ENCODE measurements at regions of chr16 and their contacts with region 1.

Region 1: DNA sequence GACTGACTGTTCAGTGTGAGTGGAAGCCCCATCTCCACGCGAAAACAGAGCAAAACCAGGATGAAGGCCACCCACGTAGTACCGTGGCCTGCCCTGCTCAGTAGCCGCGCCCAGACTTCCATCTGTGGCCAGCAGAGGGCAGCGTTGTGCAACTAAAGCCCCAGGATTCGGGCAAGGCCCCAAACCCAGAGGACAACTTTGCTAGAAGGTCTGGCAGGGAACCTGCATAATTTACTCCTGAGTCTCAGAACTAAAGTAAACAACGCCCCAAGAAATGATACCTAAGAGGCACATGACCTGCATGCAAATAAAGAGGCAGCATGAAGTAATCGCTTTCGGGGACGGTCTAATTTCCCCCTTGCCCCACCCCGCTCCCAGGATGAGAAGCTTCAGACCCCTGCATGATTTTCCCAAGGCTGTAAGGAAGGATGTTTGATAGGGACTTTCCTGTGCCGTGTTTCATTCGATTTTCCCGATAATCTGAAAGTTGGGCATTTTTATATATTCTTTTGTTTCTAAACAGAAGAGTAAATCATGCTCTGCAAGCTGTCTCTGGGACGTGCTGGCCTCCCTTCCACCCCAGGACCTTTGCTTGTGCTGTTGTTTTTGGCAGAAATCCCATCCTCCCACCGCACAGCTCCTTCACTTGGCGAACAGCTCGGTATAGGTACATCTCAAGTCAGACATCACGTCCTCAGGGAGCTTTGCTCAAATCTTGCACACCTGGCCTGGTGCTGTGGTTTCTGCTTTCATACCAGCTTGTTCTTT is 18.6 kb downstream of the HSBP1 start:
- DNase-seq: peak; percentile 67 to 83 (median 79)
- H3K4me3 ChIP-seq: no peak overlapping the region
- H3K27ac ChIP-seq: no peak overlapping the region
- H3K4me1 ChIP-seq: peaks cover 0 to 3% (median under 1%) of the 10 kb centered on the region in 4 experiments
- H3K27me3 ChIP-seq: no peaks in the 10 kb centered on the region

Region 2: DNA sequence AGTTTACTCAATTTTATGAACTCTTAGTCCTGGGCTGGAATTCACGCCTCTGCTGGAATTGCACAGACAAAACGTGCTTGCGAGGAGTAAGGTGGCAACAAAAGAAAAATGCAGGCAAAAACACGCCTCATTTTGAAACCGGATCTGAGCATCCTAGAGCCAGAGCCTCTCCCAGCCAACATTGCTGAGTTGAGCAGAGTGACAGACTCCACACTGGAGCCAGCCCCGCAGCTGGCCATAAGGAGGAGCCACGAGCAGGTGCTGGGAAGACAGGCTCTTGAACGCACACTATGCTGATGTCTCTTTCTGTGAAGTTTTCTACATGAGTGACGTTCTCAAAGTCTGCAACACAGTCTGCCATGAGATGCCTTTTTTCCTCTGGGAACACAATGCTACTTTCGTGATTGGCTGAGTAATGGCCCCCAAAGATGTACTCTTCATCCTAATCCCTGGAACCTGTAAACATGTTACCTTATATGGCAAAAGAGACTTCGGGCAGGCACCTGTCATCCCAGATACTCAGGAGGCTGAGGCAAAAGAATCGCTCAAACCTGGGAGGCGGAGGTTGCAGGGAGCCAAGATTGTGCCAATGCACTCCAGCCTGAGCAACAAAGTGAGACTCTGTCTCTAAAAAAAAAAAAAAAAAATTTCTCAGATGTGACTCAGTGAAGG is 33.0 kb before region 1 on chr16:
- CTCF ChIA-PET with region 1: no interaction called
- POLR2A ChIA-PET with region 1: no interaction called
- DNase-seq: no peak
- H3K4me3 ChIP-seq: no peak overlapping the region
- H3K27ac ChIP-seq: no peak overlapping the region
- H3K4me1 ChIP-seq: peaks cover 0 to 11% (median 5%) of the 10 kb centered on the region in 4 experiments
- H3K27me3 ChIP-seq: peaks cover 0 to 4% (median 0%) of the 10 kb centered on the region in 5 experiments

Region 3: GRCh38 chr16:83813823-83814658 is 12.3 kb before region 1 on chr16:
- CTCF ChIA-PET with region 1: interaction called, 41 read pairs
- POLR2A ChIA-PET with region 1: no interaction called
- DNase-seq: peak in 2 of 3 donors; percentile 78 to 81
- H3K4me3 ChIP-seq: no peak overlapping the region
- H3K27ac ChIP-seq: peak overlapping the region; percentile 9 to 54
- H3K4me1 ChIP-seq: peaks cover 2 to 20% (median 11%) of the 10 kb centered on the region in 4 experiments
- H3K27me3 ChIP-seq: peaks cover 0 to 2% (median 0%) of the 10 kb centered on the region in 5 experiments

Region 4: GRCh38 chr16:83842756-83843507 is 16.6 kb after region 1 on chr16:
- CTCF ChIA-PET with region 1: interaction called, 29 read pairs
- POLR2A ChIA-PET with region 1: interaction called, 3 read pairs
- DNase-seq: peak in 2 of 3 donors; percentile 72 to 81
- H3K4me3 ChIP-seq: peak overlapping the region in 1 of 7 experiments; percentile 19
- H3K27ac ChIP-seq: peak overlapping the region in 1 of 2 experiments; percentile 46
- H3K4me1 ChIP-seq: peaks cover 7 to 39% (median 28%) of the 10 kb centered on the region in 4 experiments
- H3K27me3 ChIP-seq: no peaks in the 10 kb centered on the region

Region 5: GRCh38 chr16:83878838-83879237 is 52.5 kb after region 1 on chr16:
- CTCF ChIA-PET with region 1: interaction called, 31 read pairs
- POLR2A ChIA-PET with region 1: no interaction called
- DNase-seq: peak; percentile 36 to 68 (median 50)
- H3K4me3 ChIP-seq: no peak overlapping the region
- H3K27ac ChIP-seq: no peak overlapping the region
- H3K4me1 ChIP-seq: peaks cover 0 to 2% (median 0%) of the 10 kb centered on the region in 4 experiments
- H3K27me3 ChIP-seq: no peaks in the 10 kb centered on the region

Measured in common myeloid progenitor, CD34-positive (primary cell).